ENCODE measurements at regions of chr13 and their contacts with region 1.

Region 1: GRCh38 chr13:49996951-49997895 is at the start of gene TRIM13:
- DNase-seq: peak; percentile 87
- ATAC-seq: peak; percentile 67
- H3K4me3 Mint-ChIP-seq: peak within 1 kb of the TSS; percentile 85
- H3K27ac Mint-ChIP-seq: peak within 1 kb of the TSS; percentile 97
- H3K4me1 Mint-ChIP-seq: peaks cover 33% of the 10 kb centered on the region
- H3K27me3 Mint-ChIP-seq: no peaks in the 10 kb centered on the region
- CTCF ChIP-seq: peak; percentile 49; the same call in 1 of the 2 replicates
- total RNA-seq, gene TRIM13: 27.5 to 29.1 TPM (median 27.6 TPM) in 3 replicates

Region 2: GRCh38 chr13:49869519-49869918 is 127.7 kb before region 1 on chr13:
- CTCF ChIA-PET with region 1: interaction called, 11 read pairs
- POLR2A ChIA-PET with region 1: no interaction called
- DNase-seq: peak; percentile 69
- ATAC-seq: peak; percentile 87
- H3K4me3 Mint-ChIP-seq: no peak overlapping the region
- H3K27ac Mint-ChIP-seq: no peak overlapping the region
- H3K4me1 Mint-ChIP-seq: no peaks in the 10 kb centered on the region
- H3K27me3 Mint-ChIP-seq: peaks cover 3% of the 10 kb centered on the region; the same call in 1 of the 2 replicates
- CTCF ChIP-seq: peak; percentile 24; the same call in 1 of the 2 replicates

Region 3: GRCh38 chr13:49976314-49977258 is 20.6 kb before region 1 on chr13:
- CTCF ChIA-PET with region 1: interaction called, 18 read pairs
- POLR2A ChIA-PET with region 1: no interaction called
- DNase-seq: peak; percentile 76
- ATAC-seq: peak; percentile 89
- H3K4me3 Mint-ChIP-seq: no peak overlapping the region
- H3K27ac Mint-ChIP-seq: no peak overlapping the region
- H3K4me1 Mint-ChIP-seq: 0 out of 2 replicates have a peak, but pooled peaks cover 5% of the 10 kb centered on the region
- H3K27me3 Mint-ChIP-seq: no peaks in the 10 kb centered on the region; the same call in 1 of the 2 replicates
- CTCF ChIP-seq: peak; percentile 95

Region 4: DNA sequence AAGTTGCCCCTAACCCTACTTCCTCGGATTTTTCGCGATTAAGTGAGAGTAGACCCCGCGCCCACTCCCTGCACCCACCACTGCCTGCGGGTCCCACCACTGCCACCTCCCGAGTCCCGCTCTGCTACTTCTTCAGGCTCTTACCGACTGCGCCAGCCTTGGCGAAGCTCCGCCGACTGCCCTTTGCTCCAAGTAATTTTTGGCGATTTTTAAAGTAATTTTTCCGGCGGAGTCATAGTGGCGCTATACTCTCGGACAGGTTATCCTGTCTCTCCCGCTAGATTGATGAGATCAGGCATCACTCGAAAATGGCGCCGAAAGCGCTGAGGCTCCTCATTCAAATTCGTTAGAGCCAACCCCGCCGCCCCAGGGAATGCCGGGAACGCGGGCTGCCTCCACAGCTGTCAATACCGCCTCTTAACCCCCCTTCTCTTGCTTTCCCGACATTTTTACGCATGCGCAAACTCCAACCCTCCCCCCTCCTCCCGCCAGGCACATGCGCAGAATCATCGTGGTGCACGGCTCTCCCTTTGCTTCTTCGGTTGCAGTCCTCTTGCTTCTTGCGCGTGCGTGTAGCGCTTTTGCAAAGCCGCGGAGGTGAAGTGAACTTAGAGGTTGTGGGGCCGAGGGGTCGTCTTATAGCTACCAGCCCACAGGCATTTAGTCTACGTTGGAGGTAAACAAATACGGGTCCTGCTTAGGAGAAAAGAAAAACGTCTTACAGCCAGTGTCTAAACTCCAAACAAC is 84.6 kb after region 1 on chr13:
- CTCF ChIA-PET with region 1: interaction called, 41 read pairs
- POLR2A ChIA-PET with region 1: interaction called, 52 read pairs
- DNase-seq: peak; percentile 99
- ATAC-seq: peak; percentile 87
- H3K4me3 Mint-ChIP-seq: peak overlapping the region; percentile 98
- H3K27ac Mint-ChIP-seq: peak overlapping the region; percentile 99
- H3K4me1 Mint-ChIP-seq: peaks cover 42% of the 10 kb centered on the region
- H3K27me3 Mint-ChIP-seq: peaks cover 9% of the 10 kb centered on the region; the same call in 1 of the 2 replicates
- CTCF ChIP-seq: no peak

Region 5: GRCh38 chr13:50387051-50387581 is 389.9 kb after region 1 on chr13:
- CTCF ChIA-PET with region 1: interaction called, 11 read pairs
- POLR2A ChIA-PET with region 1: no interaction called
- DNase-seq: peak; percentile 66
- ATAC-seq: peak; percentile 88
- H3K4me3 Mint-ChIP-seq: peak overlapping the region; percentile 55; the same call in 1 of the 2 replicates
- H3K27ac Mint-ChIP-seq: peak overlapping the region; percentile 93
- H3K4me1 Mint-ChIP-seq: peaks cover 83% of the 10 kb centered on the region
- H3K27me3 Mint-ChIP-seq: no peaks in the 10 kb centered on the region
- CTCF ChIP-seq: no peak

Region 6: DNA sequence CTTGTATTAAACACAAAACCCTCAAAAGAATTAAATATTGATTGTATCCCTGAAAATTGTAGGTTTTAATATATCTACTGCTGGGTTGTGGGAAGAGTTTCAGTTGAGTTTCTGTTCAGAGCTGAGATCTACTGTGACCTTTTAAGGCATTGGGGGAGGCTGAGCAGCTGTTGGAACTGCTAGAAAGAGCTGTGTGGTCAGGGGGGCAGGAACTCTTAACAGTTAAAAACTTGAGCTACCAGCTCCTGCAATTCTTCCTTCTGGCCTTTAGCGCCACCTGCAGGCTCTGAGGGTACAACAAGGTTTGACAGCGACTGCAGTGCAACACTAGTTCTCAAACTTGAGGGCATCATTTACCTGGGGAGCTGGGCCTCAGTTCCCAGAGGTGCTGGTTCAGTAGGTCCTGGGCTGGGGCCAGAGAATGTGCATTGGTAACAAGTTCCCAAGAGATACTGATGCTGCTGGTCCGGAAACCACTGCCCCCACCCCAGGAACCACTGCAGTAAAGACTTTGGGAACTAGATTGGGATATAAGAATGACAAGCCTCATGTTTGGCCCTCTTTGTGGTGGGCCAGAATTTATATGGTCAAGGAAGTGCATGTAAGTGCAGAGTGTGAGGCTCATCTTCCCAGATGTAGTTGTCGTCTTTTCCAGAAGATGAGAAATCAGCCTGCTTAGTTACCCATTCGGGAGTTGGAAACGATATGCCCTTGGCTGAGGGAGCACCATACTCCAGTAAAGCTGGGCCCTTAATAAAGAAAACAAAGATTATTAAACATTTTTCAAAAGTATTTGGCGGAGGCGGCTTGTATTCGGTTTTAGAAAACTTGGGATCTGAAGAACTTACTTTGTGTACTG is 914.9 kb after region 1 on chr13:
- CTCF ChIA-PET with region 1: interaction called, 15 read pairs
- POLR2A ChIA-PET with region 1: no interaction called
- DNase-seq: peak; percentile 97
- ATAC-seq: peak; percentile 62
- H3K4me3 Mint-ChIP-seq: peak overlapping the region; percentile 4; the same call in 1 of the 2 replicates
- H3K27ac Mint-ChIP-seq: peak overlapping the region; percentile 32
- H3K4me1 Mint-ChIP-seq: peaks cover 64% of the 10 kb centered on the region
- H3K27me3 Mint-ChIP-seq: no peaks in the 10 kb centered on the region
- CTCF ChIP-seq: peak; percentile 67